GM12878 (cell line): ENCODE measurements at regions of chr10 and their contacts with region 1.

Region 1: GRCh38 chr10:11757821-11758463 is 15.8 kb downstream of the ECHDC3 start:
- DNase-seq: peak; percentile 50
- ATAC-seq: peak; percentile 100
- H3K4me3 ChIP-seq: no peak overlapping the region
- H3K27ac ChIP-seq: peak overlapping the region; percentile 45
- H3K4me1 ChIP-seq: peaks cover 7% of the 10 kb centered on the region
- H3K27me3 ChIP-seq: no peaks in the 10 kb centered on the region
- CTCF ChIP-seq: peak; percentile 93 to 98 (median 96)
- EP300 ChIP-seq: no peak
- POLR2A ChIP-seq: no peak
- RAD21 ChIP-seq: peak; percentile 89

Region 2: DNA sequence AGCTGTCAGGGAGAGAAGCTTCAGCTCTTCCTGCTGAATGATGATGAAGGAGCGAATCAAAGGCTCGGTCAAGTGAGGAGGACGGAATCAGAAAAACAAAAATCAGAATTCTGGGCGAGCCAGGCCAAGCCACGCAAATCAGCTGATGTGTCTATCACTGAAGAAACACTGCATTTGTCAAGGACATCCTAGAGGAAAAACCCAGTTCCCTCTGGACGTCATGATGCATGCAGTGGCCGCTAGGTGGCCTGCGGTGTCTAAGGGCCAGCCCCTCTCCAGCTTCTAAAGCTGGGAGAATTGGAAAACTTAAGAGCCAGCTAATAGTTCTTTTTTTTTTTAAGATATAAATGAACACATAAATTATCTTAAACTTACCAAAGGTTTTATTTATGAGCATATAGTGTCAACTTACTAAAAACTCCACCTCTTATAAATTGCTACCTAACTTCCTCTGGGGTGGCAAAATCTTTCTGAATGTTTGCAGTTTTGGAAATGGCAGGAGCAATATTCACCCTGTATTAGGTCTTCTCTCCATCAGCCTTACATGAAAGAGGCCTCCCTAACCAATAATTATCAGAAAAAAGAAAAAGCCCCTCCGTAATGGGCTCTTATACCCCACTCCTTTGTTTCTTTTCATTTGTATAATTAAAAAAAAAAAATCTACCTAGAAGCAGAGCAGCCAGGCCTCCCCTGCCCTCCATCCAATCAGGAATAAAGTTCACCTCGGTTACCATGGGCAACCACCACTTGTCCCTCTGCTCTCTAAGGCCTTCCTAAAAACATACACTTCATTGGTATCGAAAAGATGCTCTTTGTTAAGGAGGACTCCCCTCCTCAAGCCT is 333.3 kb before region 1 on chr10:
- CTCF ChIA-PET with region 1: interaction called, 9 read pairs
- POLR2A ChIA-PET with region 1: no interaction called
- RAD21 ChIA-PET with region 1: interaction called, 21 read pairs
- SMC1A ChIA-PET with region 1: interaction called, 13 read pairs
- in situ Hi-C with region 1: no loop called
- intact Hi-C with region 1: loop called (anchors 2 kb)
- DNase-seq: no peak
- ATAC-seq: peak; percentile 91
- H3K4me3 ChIP-seq: no peak overlapping the region
- H3K27ac ChIP-seq: no peak overlapping the region
- H3K4me1 ChIP-seq: no peaks in the 10 kb centered on the region
- H3K27me3 ChIP-seq: no peaks in the 10 kb centered on the region; a peak in 1 of 4 replicates
- CTCF ChIP-seq: peak; percentile 79 to 91 (median 89)
- EP300 ChIP-seq: no peak
- POLR2A ChIP-seq: no peak
- RAD21 ChIP-seq: peak; percentile 79

Region 3: GRCh38 chr10:11488126-11488525 is 269.8 kb before region 1 on chr10:
- CTCF ChIA-PET with region 1: interaction called, 13 read pairs
- POLR2A ChIA-PET with region 1: no interaction called
- RAD21 ChIA-PET with region 1: interaction called, 3 read pairs
- SMC1A ChIA-PET with region 1: interaction called, 10 read pairs
- in situ Hi-C with region 1: no loop called
- intact Hi-C with region 1: no loop called
- DNase-seq: no peak
- ATAC-seq: no peak
- H3K4me3 ChIP-seq: no peak overlapping the region
- H3K27ac ChIP-seq: no peak overlapping the region
- H3K4me1 ChIP-seq: peaks cover under 1% of the 10 kb centered on the region; the same call in 1 of the 2 replicates
- H3K27me3 ChIP-seq: no peaks in the 10 kb centered on the region
- CTCF ChIP-seq: no peak
- EP300 ChIP-seq: no peak
- POLR2A ChIP-seq: no peak
- RAD21 ChIP-seq: no peak

Region 4: GRCh38 chr10:11510736-11511135 is 247.2 kb before region 1 on chr10:
- CTCF ChIA-PET with region 1: interaction called, 125 read pairs
- POLR2A ChIA-PET with region 1: no interaction called
- RAD21 ChIA-PET with region 1: interaction called, 56 read pairs
- SMC1A ChIA-PET with region 1: interaction called, 53 read pairs
- in situ Hi-C with region 1: loop called (anchors 5 kb)
- intact Hi-C with region 1: loop called (anchors 1 kb)
- DNase-seq: no peak
- ATAC-seq: no peak
- H3K4me3 ChIP-seq: no peak overlapping the region
- H3K27ac ChIP-seq: no peak overlapping the region
- H3K4me1 ChIP-seq: peaks cover under 1% of the 10 kb centered on the region; the same call in 1 of the 2 replicates
- H3K27me3 ChIP-seq: no peaks in the 10 kb centered on the region
- CTCF ChIP-seq: no peak
- EP300 ChIP-seq: no peak
- POLR2A ChIP-seq: no peak
- RAD21 ChIP-seq: no peak

Region 5: DNA sequence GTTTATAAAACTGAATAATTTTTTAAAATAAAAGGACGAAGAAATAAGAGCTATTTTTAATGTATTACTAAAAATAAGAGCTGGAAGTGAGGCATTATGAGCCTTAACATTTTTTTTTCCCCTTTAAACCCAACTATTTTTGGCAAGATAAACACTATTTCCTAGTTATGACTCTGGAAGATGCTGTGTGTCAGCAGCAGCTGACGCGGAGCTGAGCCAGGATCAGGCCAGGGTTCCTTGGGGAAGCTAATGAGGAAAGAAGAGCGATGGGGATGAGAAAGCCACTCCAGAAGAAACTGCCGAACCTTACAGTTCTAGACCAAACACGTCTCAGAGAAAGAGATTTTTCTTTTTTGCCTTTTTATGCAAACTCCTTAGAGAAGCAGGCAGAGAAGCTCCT is 232.4 kb before region 1 on chr10:
- CTCF ChIA-PET with region 1: interaction called, 52 read pairs
- POLR2A ChIA-PET with region 1: no interaction called
- RAD21 ChIA-PET with region 1: interaction called, 6 read pairs
- SMC1A ChIA-PET with region 1: interaction called, 8 read pairs
- in situ Hi-C with region 1: no loop called
- intact Hi-C with region 1: no loop called
- DNase-seq: no peak
- ATAC-seq: no peak
- H3K4me3 ChIP-seq: no peak overlapping the region
- H3K27ac ChIP-seq: no peak overlapping the region
- H3K4me1 ChIP-seq: peaks cover 14% of the 10 kb centered on the region
- H3K27me3 ChIP-seq: no peaks in the 10 kb centered on the region
- CTCF ChIP-seq: no peak
- EP300 ChIP-seq: no peak
- POLR2A ChIP-seq: no peak
- RAD21 ChIP-seq: no peak

Region 6: DNA sequence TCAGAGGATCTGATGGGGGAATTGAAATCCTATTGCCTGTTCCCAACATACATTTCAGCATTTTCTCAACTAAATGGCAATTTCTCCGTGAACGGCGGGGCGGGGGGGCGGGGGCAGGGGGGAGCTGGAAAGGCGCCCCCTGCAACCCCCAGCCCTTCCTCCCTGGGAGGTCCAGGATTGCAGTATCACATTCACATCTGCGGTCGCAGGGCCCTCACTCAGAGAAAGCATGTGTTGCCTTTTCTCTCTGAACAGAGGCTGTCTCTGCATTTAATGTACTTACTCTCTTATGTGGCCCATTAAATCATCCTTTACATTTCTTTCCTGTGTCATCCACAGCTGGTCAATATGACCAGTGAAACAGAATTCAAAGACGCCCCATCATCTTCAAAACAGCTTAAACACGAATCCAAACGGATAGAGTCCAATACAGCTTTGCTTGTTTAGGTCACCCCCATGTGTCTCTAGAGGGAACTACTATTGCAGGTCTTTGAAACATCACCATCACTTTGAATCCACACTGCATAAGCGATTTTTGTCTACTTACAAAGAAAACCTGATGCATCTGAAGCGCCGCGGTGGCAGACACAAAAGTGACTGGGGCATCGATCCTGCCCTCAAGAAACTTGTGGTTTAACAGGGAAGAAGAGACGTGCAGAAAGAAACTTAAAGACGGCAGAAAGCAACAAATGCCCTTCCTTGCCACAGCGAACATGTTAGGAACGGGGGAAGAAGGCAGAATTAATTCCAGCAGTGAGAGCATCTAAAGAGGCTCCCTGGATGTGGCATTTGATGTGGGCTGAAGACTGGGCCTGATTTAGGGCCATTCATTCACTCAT is 32.8 kb before region 1 on chr10:
- CTCF ChIA-PET with region 1: interaction called, 15 read pairs
- POLR2A ChIA-PET with region 1: no interaction called
- RAD21 ChIA-PET with region 1: interaction called, 9 read pairs
- SMC1A ChIA-PET with region 1: interaction called, 13 read pairs
- in situ Hi-C with region 1: no loop called
- intact Hi-C with region 1: loop called (anchors 1 kb)
- DNase-seq: peak; percentile 60
- ATAC-seq: peak; percentile 98
- H3K4me3 ChIP-seq: no peak overlapping the region
- H3K27ac ChIP-seq: no peak overlapping the region
- H3K4me1 ChIP-seq: peaks cover 3% of the 10 kb centered on the region
- H3K27me3 ChIP-seq: no peaks in the 10 kb centered on the region; a peak in 2 of 4 replicates
- CTCF ChIP-seq: peak; percentile 81 to 92 (median 90)
- EP300 ChIP-seq: no peak
- POLR2A ChIP-seq: no peak
- RAD21 ChIP-seq: peak; percentile 100

Region 7: DNA sequence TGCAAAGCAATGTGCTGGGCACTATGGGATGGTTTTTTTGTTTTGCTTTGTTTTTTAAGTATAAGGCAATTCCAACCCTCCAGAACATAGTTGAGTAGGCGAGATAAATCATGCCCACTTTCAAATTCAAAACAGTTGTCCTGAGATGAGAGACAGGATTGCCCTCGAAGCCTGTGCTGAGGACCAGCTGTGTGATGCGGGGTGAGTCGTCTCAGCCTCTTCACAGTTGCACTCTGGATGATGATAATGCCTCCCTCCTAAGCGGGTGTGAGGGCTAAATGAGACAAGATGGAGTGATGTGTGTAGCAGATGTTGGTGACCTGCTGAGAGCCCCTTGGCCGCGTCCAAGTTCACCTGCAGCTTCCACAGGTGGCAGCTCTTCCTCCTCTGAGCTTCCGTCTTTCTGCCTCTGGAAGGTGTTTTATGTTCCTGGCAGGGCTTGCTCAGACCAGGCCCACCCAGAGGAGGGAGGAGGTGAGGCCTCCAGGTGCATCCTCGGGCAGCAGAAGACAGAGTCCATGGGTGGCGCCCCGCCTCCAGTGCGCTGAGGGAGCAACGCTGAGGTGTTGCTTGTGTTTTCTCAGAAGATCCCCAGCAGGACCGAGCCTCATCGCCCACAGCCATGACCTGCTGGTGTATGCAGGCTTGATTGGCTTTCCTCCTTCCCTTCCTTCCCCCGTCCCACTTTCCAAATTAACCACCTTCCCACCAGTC is 14.8 kb after region 1 on chr10:
- CTCF ChIA-PET with region 1: interaction called, 11 read pairs
- POLR2A ChIA-PET with region 1: no interaction called
- RAD21 ChIA-PET with region 1: no interaction called
- SMC1A ChIA-PET with region 1: no interaction called
- in situ Hi-C with region 1: no loop called
- intact Hi-C with region 1: no loop called
- DNase-seq: no peak
- ATAC-seq: no peak
- H3K4me3 ChIP-seq: no peak overlapping the region
- H3K27ac ChIP-seq: no peak overlapping the region
- H3K4me1 ChIP-seq: no peaks in the 10 kb centered on the region
- H3K27me3 ChIP-seq: no peaks in the 10 kb centered on the region; a peak in 1 of 4 replicates
- CTCF ChIP-seq: no peak
- EP300 ChIP-seq: no peak
- POLR2A ChIP-seq: no peak
- RAD21 ChIP-seq: no peak